CD8-positive, alpha-beta T cell (primary cell): ENCODE measurements at regions of chr1 and their contacts with region 1.

Region 1: GRCh38 chr1:151059078-151059907 is at the start of gene CDC42SE1:
- DNase-seq: peak; percentile 72 to 95 (median 86)
- ATAC-seq: peak; percentile 75
- H3K4me3 ChIP-seq: peak within 1 kb of the TSS; percentile 90 to 93
- H3K4me3 Mint-ChIP-seq: peak within 1 kb of the TSS; percentile 99
- H3K27ac ChIP-seq: peak within 1 kb of the TSS; percentile 88 to 95
- H3K27ac Mint-ChIP-seq: peak within 1 kb of the TSS; percentile 98
- H3K4me1 ChIP-seq: peaks cover 29% of the 10 kb centered on the region
- H3K4me1 Mint-ChIP-seq: peaks cover 56% of the 10 kb centered on the region
- H3K27me3 ChIP-seq: no peaks in the 10 kb centered on the region
- H3K27me3 Mint-ChIP-seq: no peaks in the 10 kb centered on the region
- CTCF ChIP-seq: peak; percentile 81
- total RNA-seq, gene CDC42SE1: 275 to 282 TPM

Region 2: GRCh38 chr1:150572918-150573647 is 486.2 kb before region 1 on chr1:
- CTCF ChIA-PET with region 1: no interaction called
- POLR2A ChIA-PET with region 1: interaction called, 3 read pairs
- intact Hi-C with region 1: loop called (anchors 5 kb)
- DNase-seq: peak in 4 of 9 experiments; percentile 16 to 49 (median 36)
- ATAC-seq: no peak
- H3K4me3 ChIP-seq: peak overlapping the region; percentile 15 to 33
- H3K4me3 Mint-ChIP-seq: peak overlapping the region; percentile 96
- H3K27ac ChIP-seq: peak overlapping the region; percentile 42 to 60
- H3K27ac Mint-ChIP-seq: peak overlapping the region; percentile 98
- H3K4me1 ChIP-seq: peaks cover 57% of the 10 kb centered on the region
- H3K4me1 Mint-ChIP-seq: peaks cover 72% of the 10 kb centered on the region
- H3K27me3 ChIP-seq: no peaks in the 10 kb centered on the region
- H3K27me3 Mint-ChIP-seq: no peaks in the 10 kb centered on the region
- CTCF ChIP-seq: no peak

Region 3: GRCh38 chr1:150661156-150661555 is 398.1 kb before region 1 on chr1:
- CTCF ChIA-PET with region 1: no interaction called
- POLR2A ChIA-PET with region 1: no interaction called
- intact Hi-C with region 1: no loop called
- DNase-seq: no peak
- ATAC-seq: no peak
- H3K4me3 ChIP-seq: no peak overlapping the region
- H3K4me3 Mint-ChIP-seq: no peak overlapping the region
- H3K27ac ChIP-seq: no peak overlapping the region
- H3K27ac Mint-ChIP-seq: no peak overlapping the region
- H3K4me1 ChIP-seq: no peaks in the 10 kb centered on the region
- H3K4me1 Mint-ChIP-seq: peaks cover 3% of the 10 kb centered on the region
- H3K27me3 ChIP-seq: no peaks in the 10 kb centered on the region
- H3K27me3 Mint-ChIP-seq: no peaks in the 10 kb centered on the region
- CTCF ChIP-seq: no peak

Region 4: GRCh38 chr1:150979092-150980056 is 79.9 kb before region 1 on chr1:
- CTCF ChIA-PET with region 1: no interaction called
- POLR2A ChIA-PET with region 1: no interaction called
- intact Hi-C with region 1: loop called in 1 of 2 experiments (anchors 2 kb)
- DNase-seq: peak; percentile 83 to 93 (median 90)
- ATAC-seq: peak; percentile 62
- H3K4me3 ChIP-seq: peak overlapping the region; percentile 22 to 32
- H3K4me3 Mint-ChIP-seq: peak overlapping the region; percentile 57
- H3K27ac ChIP-seq: peak overlapping the region in 1 of 2 experiments; percentile 47
- H3K27ac Mint-ChIP-seq: peak overlapping the region; percentile 3
- H3K4me1 ChIP-seq: peaks cover 41% of the 10 kb centered on the region
- H3K4me1 Mint-ChIP-seq: peaks cover 38% of the 10 kb centered on the region
- H3K27me3 ChIP-seq: no peaks in the 10 kb centered on the region
- H3K27me3 Mint-ChIP-seq: no peaks in the 10 kb centered on the region
- CTCF ChIP-seq: peak; percentile 100

Region 5: DNA sequence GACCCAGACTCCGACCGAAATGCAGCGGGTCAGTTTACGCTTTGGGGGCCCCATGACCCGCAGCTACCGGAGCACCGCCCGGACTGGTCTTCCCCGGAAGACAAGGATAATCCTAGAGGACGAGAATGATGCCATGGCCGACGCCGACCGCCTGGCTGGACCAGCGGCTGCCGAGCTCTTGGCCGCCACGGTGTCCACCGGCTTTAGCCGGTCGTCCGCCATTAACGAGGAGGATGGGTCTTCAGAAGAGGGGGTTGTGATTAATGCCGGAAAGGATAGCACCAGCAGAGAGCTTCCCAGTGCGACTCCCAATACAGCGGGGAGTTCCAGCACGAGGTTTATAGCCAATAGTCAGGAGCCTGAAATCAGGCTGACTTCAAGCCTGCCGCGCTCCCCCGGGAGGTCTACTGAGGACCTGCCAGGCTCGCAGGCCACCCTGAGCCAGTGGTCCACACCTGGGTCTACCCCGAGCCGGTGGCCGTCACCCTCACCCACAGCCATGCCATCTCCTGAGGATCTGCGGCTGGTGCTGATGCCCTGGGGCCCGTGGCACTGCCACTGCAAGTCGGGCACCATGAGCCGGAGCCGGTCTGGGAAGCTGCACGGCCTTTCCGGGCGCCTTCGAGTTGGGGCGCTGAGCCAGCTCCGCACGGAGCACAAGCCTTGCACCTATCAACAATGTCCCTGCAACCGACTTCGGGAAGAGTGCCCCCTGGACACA is 11.2 kb before region 1 on chr1:
- CTCF ChIA-PET with region 1: interaction called, 14 read pairs
- POLR2A ChIA-PET with region 1: interaction called, 122 read pairs
- intact Hi-C with region 1: loop called (anchors 1 kb)
- DNase-seq: peak in 8 of 9 experiments; percentile 43 to 86 (median 67)
- ATAC-seq: peak; percentile 81
- H3K4me3 ChIP-seq: peak overlapping the region; percentile 89 to 98
- H3K4me3 Mint-ChIP-seq: peak overlapping the region; percentile 91
- H3K27ac ChIP-seq: peak overlapping the region; percentile 53 to 88
- H3K27ac Mint-ChIP-seq: peak overlapping the region; percentile 91
- H3K4me1 ChIP-seq: peaks cover 39% of the 10 kb centered on the region
- H3K4me1 Mint-ChIP-seq: peaks cover 64% of the 10 kb centered on the region
- H3K27me3 ChIP-seq: no peaks in the 10 kb centered on the region
- H3K27me3 Mint-ChIP-seq: no peaks in the 10 kb centered on the region
- CTCF ChIP-seq: peak; percentile 51

Region 6: DNA sequence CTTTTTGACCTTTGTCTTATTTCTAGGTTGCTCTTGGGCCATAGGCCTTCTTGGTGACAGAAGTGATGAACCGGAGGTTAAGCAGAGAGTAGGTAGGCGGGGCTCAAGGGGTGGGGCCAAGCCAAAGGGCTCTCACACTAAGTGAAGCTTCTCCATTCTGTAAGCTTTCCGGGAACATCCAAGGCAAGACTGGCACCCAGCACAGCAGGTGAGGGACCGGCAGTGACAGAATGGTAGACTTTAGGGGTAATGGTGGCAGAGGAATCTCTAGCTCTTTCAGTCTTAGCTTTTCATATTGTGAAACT is 97.2 kb after region 1 on chr1 and contains the start of gene TNFAIP8L2:
- CTCF ChIA-PET with region 1: interaction called, 5 read pairs
- POLR2A ChIA-PET with region 1: interaction called, 10 read pairs
- intact Hi-C with region 1: loop called in 1 of 2 experiments (anchors 1 kb)
- DNase-seq: peak; percentile 45 to 86 (median 74)
- ATAC-seq: peak; percentile 83
- H3K4me3 ChIP-seq: peak within 1 kb of the TSS; percentile 83 to 89
- H3K4me3 Mint-ChIP-seq: peak within 1 kb of the TSS; percentile 97
- H3K27ac ChIP-seq: peak within 1 kb of the TSS; percentile 55 to 70
- H3K27ac Mint-ChIP-seq: peak within 1 kb of the TSS; percentile 92
- H3K4me1 ChIP-seq: peaks cover 35% of the 10 kb centered on the region
- H3K4me1 Mint-ChIP-seq: peaks cover 55% of the 10 kb centered on the region
- H3K27me3 ChIP-seq: no peaks in the 10 kb centered on the region
- H3K27me3 Mint-ChIP-seq: no peaks in the 10 kb centered on the region
- CTCF ChIP-seq: no peak
- total RNA-seq, gene TNFAIP8L2: 0.62 to 0.86 TPM